GM10248 (cell line): ENCODE measurements at regions of chr1 and their contacts with region 1.

Region 1: GRCh38 chr1:188782219-188782841 is 1695.3 kb downstream of the BRINP3 start:
- DNase-seq: peak; percentile 11
- CTCF ChIP-seq: peak; percentile 37

Region 2: GRCh38 chr1:188642704-188643103 is 139.6 kb before region 1 on chr1:
- CTCF ChIA-PET with region 1: no interaction called
- POLR2A ChIA-PET with region 1: no interaction called
- DNase-seq: no peak
- CTCF ChIP-seq: no peak

Region 3: DNA sequence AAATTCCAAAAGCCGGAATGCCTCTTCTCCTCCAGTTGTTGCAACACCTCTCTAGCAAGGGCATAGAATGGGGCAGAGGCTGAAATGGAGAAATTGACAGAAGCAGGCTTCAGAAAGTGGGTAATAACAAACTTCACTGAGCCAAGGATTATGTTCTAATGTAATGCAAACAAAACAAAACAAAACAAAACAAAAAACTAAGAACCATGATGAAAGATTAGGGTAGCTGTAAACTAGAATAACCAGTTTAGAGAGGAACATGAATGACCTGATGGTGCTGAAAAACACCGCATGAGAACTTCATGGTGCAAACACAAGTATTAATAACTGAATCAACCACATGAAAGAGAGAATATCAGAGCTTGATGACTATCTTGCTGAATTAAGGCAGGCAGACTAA is 12.4 kb before region 1 on chr1:
- CTCF ChIA-PET with region 1: interaction called, 30 read pairs
- POLR2A ChIA-PET with region 1: no interaction called
- DNase-seq: no peak
- CTCF ChIP-seq: no peak

Region 4: GRCh38 chr1:188794969-188795368 is 12.6 kb after region 1 on chr1:
- CTCF ChIA-PET with region 1: interaction called, 10 read pairs
- POLR2A ChIA-PET with region 1: no interaction called
- DNase-seq: no peak
- CTCF ChIP-seq: no peak